Calu3 (cell line): ENCODE measurements at regions of chr4 and their contacts with region 1.

Region 1: DNA sequence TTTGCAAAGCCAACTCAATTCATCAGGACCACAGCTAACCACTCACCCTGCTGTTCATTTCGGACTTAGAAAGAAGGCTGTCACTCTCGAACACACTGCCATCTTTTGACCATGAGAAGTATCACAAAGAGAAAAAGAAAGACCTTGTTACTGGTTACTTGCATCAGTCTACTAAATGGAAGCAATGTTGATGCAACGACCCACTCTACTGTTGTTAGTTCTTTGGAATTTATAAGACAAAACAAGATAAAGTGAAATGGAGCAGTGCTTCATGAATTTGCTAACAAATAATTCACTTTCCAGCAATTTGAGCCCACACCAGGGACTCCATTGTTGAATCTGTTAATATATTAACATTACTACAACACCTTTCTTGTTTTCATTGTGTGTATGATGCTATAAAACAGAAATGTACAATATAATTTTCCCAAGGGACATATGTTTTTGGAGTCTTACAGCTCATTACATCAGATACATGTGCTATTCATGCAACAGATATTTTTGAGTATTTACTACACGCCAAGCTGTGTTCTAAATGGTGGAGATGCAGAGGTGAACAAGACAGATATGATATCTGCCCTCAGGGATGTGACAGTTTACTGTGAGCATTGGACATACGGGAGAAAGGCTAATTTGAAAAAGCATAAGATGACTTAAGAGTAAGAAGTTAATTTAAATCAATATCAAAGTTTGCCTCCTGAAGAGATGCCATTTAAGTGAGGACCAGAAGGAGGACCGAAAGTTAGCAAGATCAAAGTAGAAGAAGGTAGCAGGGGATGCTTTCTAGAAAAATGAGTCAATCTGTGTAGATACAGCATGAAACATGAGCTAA is 87.2 kb downstream of the AREG start:
- DNase-seq: peak; percentile 40
- H3K4me3 Mint-ChIP-seq: peak overlapping the region; percentile 52
- H3K27ac Mint-ChIP-seq: peak overlapping the region; percentile 99
- H3K4me1 Mint-ChIP-seq: peaks cover 39% of the 10 kb centered on the region
- H3K27me3 Mint-ChIP-seq: no peaks in the 10 kb centered on the region
- CTCF ChIP-seq: peak; percentile 33

Region 2: DNA sequence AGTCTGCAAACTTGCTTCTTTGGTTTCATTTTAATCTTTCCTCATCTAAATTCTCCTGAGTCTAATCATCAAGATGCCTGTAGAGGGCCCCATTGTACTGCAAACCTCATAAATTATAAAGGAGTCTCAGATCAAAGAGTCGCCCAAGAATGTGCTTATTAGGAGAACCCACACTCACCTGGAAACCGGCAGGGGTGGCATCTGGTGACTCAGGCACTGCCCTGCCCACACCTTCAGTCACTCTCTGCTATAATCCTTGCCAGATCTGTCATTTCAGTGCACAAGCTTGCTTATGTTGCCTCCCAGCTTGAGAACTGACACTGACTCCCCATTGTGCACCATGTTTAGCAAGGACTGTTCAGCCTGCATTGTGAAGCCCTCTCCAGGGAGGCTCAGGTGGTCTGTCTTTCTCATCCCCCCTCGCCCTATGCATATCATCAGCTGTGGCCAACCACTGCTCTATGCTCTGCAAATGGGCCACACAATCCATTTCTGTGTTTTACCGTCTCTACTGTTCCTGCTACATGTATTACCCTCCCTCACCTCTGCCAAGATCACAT is 211.5 kb before region 1 on chr4:
- CTCF ChIA-PET with region 1: interaction called, 6 read pairs
- intact Hi-C with region 1: loop called (anchors 1 kb)
- DNase-seq: peak; percentile 85
- H3K4me3 Mint-ChIP-seq: peak overlapping the region; percentile 56
- H3K27ac Mint-ChIP-seq: peak overlapping the region; percentile 58
- H3K4me1 Mint-ChIP-seq: peaks cover 15% of the 10 kb centered on the region
- H3K27me3 Mint-ChIP-seq: no peaks in the 10 kb centered on the region
- CTCF ChIP-seq: peak; percentile 54

Region 3: GRCh38 chr4:74394476-74395136 is 137.6 kb before region 1 on chr4:
- CTCF ChIA-PET with region 1: interaction called, 3 read pairs
- intact Hi-C with region 1: loop called (anchors 5 kb)
- DNase-seq: no peak
- H3K4me3 Mint-ChIP-seq: peak overlapping the region; percentile 27
- H3K27ac Mint-ChIP-seq: peak overlapping the region; percentile 87
- H3K4me1 Mint-ChIP-seq: peaks cover 48% of the 10 kb centered on the region
- H3K27me3 Mint-ChIP-seq: no peaks in the 10 kb centered on the region
- CTCF ChIP-seq: no peak

Region 4: DNA sequence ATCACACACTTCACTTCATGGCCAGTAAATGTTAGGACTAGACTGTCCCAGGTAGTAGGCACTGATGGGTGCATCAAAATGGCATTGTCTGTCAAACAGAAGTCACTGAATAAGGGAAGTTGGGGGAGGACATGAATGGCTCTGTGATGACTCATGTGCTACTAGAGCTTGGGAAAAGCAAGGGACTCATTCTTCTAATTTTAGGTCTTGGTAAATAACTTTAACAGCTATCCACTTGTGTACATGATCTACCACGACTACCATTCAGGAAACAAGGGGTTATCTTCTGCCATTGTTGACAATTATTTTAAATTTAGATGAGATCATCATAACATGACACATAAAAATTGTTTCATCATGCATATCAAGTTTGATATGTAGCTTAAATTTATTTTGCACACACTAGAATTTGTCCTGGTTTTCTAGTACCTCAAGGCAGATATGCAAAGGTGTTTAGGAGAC is 80.9 kb before region 1 on chr4:
- CTCF ChIA-PET with region 1: interaction called, 5 read pairs
- intact Hi-C with region 1: loop called (anchors 2 kb)
- DNase-seq: peak; percentile 44
- H3K4me3 Mint-ChIP-seq: peak overlapping the region; percentile 64
- H3K27ac Mint-ChIP-seq: peak overlapping the region; percentile 74
- H3K4me1 Mint-ChIP-seq: peaks cover 32% of the 10 kb centered on the region
- H3K27me3 Mint-ChIP-seq: no peaks in the 10 kb centered on the region
- CTCF ChIP-seq: no peak

Region 5: GRCh38 chr4:74473155-74473811 is 58.9 kb before region 1 on chr4:
- CTCF ChIA-PET with region 1: no interaction called
- intact Hi-C with region 1: loop called (anchors 5 kb)
- DNase-seq: peak; percentile 38
- H3K4me3 Mint-ChIP-seq: no peak overlapping the region
- H3K27ac Mint-ChIP-seq: peak overlapping the region; percentile 76
- H3K4me1 Mint-ChIP-seq: peaks cover 44% of the 10 kb centered on the region
- H3K27me3 Mint-ChIP-seq: no peaks in the 10 kb centered on the region
- CTCF ChIP-seq: no peak

Region 6: GRCh38 chr4:74659576-74660411 is 127.6 kb after region 1 on chr4:
- CTCF ChIA-PET with region 1: interaction called, 11 read pairs
- intact Hi-C with region 1: loop called (anchors 2 kb)
- DNase-seq: peak; percentile 69
- H3K4me3 Mint-ChIP-seq: peak overlapping the region; percentile 53
- H3K27ac Mint-ChIP-seq: peak overlapping the region; percentile 97
- H3K4me1 Mint-ChIP-seq: peaks cover 60% of the 10 kb centered on the region
- H3K27me3 Mint-ChIP-seq: no peaks in the 10 kb centered on the region
- CTCF ChIP-seq: no peak

Region 7: GRCh38 chr4:74665377-74665776 is 133.2 kb after region 1 on chr4:
- CTCF ChIA-PET with region 1: interaction called, 11 read pairs
- intact Hi-C with region 1: loop called (anchors 2 kb)
- DNase-seq: peak; percentile 65
- H3K4me3 Mint-ChIP-seq: peak overlapping the region; percentile 43
- H3K27ac Mint-ChIP-seq: peak overlapping the region; percentile 97
- H3K4me1 Mint-ChIP-seq: peaks cover 81% of the 10 kb centered on the region
- H3K27me3 Mint-ChIP-seq: no peaks in the 10 kb centered on the region
- CTCF ChIP-seq: no peak